Activated CD4-positive, alpha-beta memory T cell treated with anti-CD3 and anti-CD28 coated beads for 36 hours (primary cell): ENCODE measurements at regions of chr2 and their contacts with region 1.

Region 1: DNA sequence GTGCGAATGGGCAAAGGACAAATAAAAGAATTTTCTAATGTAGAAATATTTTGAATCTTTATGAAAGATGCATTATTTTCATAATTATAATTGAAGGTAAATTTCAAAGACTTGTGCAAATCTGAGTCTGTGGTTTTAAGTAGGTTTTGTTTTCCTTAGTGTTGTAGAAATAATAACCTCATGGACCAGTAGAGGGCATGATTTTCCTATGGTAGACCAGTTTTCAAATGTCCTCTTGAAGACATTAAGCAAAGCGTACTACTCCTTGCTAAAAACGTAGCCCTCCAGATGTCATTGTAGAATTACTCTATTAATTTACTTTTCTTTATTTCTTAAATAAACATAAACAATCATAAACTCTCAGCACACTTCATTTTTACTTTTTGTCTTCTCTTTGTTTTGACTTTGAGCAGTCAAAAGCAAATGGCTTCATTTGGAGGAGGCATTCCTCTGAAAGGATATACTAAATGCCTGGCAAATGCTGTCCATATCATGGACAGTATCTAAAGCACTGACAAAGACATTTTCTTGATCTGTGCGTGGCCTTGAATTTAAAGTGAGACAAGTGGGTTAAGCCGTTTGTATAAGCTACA is 85.8 kb upstream of the FAM237A start:
- DNase-seq: no peak
- H3K4me3 Mint-ChIP-seq: no peak overlapping the region
- H3K27ac Mint-ChIP-seq: no peak overlapping the region
- H3K4me1 Mint-ChIP-seq: peaks cover 22% of the 10 kb centered on the region
- H3K27me3 Mint-ChIP-seq: peaks cover 2% of the 10 kb centered on the region

Region 2: DNA sequence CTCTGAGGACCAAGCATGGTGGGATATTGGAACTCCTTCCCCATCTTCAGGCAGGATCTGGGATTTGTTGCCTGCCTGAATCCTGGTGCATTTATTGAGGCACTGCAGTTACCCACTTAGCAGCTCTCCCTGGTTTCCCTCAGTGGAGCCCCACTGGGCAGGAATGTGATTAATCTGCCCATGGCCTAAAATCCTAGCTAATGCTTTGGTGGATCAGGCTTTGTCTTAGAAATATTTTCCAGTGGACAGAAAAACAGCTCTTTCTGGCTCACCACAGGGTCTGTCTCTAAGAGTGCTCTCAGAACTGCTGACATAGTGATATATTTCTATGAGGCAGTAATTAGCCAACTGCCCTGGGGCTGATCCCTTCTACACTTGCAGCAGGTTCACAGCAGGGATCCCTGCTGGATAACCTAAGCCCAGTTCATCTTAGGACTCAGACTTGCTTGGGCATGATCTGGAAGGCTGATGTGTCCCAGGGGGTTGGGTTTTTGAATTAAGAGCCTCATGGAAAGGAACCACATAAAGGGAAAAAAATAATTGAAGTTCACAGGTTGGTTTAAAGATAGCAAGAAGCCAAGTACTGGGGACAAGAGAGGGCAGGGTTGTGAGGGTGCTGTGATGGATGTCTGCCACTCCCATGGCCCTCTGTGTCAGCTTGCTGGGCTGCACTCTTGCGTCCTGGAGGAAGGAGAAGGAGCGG is 326.2 kb before region 1 on chr2:
- CTCF ChIA-PET with region 1: no interaction called
- POLR2A ChIA-PET with region 1: no interaction called
- intact Hi-C with region 1: no loop called
- DNase-seq: no peak
- H3K4me3 Mint-ChIP-seq: no peak overlapping the region
- H3K27ac Mint-ChIP-seq: no peak overlapping the region
- H3K4me1 Mint-ChIP-seq: peaks cover 10% of the 10 kb centered on the region
- H3K27me3 Mint-ChIP-seq: peaks cover 10% of the 10 kb centered on the region

Region 3: GRCh38 chr2:206274434-206275268 is 281.8 kb before region 1 on chr2 and contains the start of gene ZDBF2:
- CTCF ChIA-PET with region 1: no interaction called
- POLR2A ChIA-PET with region 1: no interaction called
- intact Hi-C with region 1: loop called (anchors 10 kb)
- DNase-seq: peak; percentile 60
- H3K4me3 Mint-ChIP-seq: peak within 1 kb of the TSS; percentile 80
- H3K27ac Mint-ChIP-seq: peak within 1 kb of the TSS; percentile 73
- H3K4me1 Mint-ChIP-seq: peaks cover 21% of the 10 kb centered on the region
- H3K27me3 Mint-ChIP-seq: peaks cover 42% of the 10 kb centered on the region
- total RNA-seq, gene ZDBF2: 7.4 to 7.8 TPM

Region 4: DNA sequence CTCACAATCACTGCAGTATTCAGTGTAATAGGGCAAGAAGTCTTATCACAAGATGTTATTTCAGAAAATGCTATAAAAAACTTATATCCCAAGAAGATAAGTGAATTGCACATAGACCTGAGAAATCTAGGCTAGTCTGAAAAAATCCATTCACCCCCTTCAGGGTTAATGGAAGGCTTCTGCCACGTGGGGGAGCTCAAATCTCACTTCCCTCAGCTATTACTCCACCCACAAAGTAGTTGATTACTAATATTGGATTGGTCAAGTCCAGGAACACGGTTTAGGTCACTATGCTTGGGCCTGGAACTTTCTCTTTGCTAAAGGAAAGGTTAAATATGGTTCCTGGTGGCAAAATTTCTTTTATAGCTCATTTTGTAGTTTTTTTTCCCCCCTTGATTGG is 164.3 kb before region 1 on chr2:
- CTCF ChIA-PET with region 1: interaction called, 7 read pairs
- POLR2A ChIA-PET with region 1: no interaction called
- intact Hi-C with region 1: loop called (anchors 1 kb)
- DNase-seq: peak; percentile 45
- H3K4me3 Mint-ChIP-seq: no peak overlapping the region
- H3K27ac Mint-ChIP-seq: no peak overlapping the region
- H3K4me1 Mint-ChIP-seq: no peaks in the 10 kb centered on the region
- H3K27me3 Mint-ChIP-seq: no peaks in the 10 kb centered on the region

Region 5: GRCh38 chr2:206765242-206766056 is 209.0 kb after region 1 on chr2 and contains the starts of genes FASTKD2 and MDH1B:
- CTCF ChIA-PET with region 1: no interaction called
- POLR2A ChIA-PET with region 1: no interaction called
- intact Hi-C with region 1: loop called (anchors 5 kb)
- DNase-seq: peak; percentile 94
- H3K4me3 Mint-ChIP-seq: peak within 1 kb of the TSS; percentile 93
- H3K27ac Mint-ChIP-seq: peak within 1 kb of the TSS; percentile 96
- H3K4me1 Mint-ChIP-seq: peaks cover 31% of the 10 kb centered on the region
- H3K27me3 Mint-ChIP-seq: no peaks in the 10 kb centered on the region
- total RNA-seq, gene FASTKD2: 31.3 to 32.0 TPM
- total RNA-seq, gene MDH1B: 0.74 to 0.87 TPM